AG04449 (cell line): ENCODE measurements at regions of chr10 and their contacts with region 1.

Region 1: GRCh38 chr10:98314489-98315284 is 46.7 kb upstream of the LOXL4 start:
- DNase-seq: no peak
- H3K4me3 ChIP-seq: no peak overlapping the region
- CTCF ChIP-seq: no peak

Region 2: GRCh38 chr10:98242823-98243222 is 71.9 kb before region 1 on chr10:
- CTCF ChIA-PET with region 1: interaction called, 109 read pairs
- POLR2A ChIA-PET with region 1: no interaction called
- DNase-seq: no peak
- H3K4me3 ChIP-seq: no peak overlapping the region
- CTCF ChIP-seq: peak; percentile 50

Region 3: DNA sequence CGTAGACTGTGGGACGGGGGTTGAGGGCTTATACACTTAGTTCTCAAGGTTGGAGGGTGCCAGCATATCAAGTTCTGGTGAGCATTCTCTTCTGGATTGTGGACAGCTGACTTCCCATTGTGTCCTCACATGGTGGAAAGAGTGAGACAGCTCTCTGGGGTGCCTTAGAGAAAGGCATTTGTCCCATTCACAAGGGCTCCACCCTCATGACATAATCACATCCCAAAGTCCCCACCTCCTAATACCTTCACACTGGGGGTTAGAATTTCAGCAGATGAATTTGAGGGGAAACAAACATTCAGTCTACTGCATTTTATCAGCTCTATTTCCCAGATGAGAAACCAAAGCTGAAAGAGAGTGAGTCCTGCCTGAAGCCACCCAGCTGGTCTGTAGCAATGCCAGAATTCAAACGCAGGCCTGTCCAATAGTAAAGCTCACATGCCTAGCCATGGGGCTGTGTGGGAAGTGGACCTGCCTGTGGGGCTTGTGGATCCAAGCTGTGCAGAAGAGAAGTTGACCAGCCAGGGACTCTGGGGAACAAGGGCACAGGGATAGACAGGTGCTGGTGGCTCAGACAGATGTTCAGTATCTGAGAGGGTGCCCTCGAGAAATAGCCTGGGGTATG is 11.8 kb before region 1 on chr10:
- CTCF ChIA-PET with region 1: interaction called, 47 read pairs
- POLR2A ChIA-PET with region 1: no interaction called
- DNase-seq: no peak
- H3K4me3 ChIP-seq: no peak overlapping the region
- CTCF ChIP-seq: no peak

Region 4: GRCh38 chr10:99008054-99008453 is 693.4 kb after region 1 on chr10:
- CTCF ChIA-PET with region 1: no interaction called
- POLR2A ChIA-PET with region 1: no interaction called
- DNase-seq: no peak
- H3K4me3 ChIP-seq: no peak overlapping the region
- CTCF ChIP-seq: no peak